Stomach (tissue), 19 donors: ENCODE measurements at regions of chr1 and their contacts with region 1.

Region 1: DNA sequence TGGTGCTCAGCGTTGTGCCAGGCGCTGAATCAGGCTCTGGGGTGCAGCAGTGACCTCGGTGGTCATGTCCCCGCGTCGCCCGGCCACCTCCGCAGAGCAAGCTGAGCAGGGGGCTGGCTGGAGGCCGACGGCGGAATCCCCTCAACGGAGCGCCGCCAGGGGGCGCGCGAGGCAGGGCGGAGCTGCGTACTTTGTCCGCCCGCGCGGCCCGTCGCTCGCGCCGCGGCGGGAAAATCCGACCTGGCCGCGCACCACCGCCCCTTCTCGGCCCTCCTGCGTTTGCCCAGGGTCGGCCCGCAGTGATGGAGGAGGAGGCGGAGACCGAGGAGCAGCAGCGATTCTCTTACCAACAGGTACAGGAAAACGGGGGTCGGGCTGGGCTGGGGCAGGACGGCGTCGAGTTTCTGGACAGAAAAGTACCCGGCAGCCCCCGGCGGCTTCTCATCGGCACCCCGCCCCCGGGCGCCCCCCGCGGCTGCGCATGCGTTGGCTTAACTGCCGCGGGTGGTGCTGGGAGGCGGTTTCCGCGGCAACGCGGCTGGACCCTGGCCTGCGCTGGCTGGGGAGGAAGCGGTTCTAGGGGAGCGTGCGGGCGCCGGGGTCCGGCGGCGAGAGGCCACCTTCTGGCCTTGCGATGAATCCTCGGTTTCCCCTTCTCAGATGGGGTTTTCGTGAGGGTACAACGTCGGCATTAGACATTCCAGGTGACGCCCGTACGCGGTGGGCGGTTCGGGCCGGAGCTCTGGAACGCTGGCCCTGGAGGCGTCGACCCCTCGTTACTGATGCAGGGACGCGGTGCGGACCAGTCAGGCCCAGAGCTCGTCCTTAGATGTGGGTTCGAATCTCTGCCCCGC is at the start of gene CENPS:
- DNase-seq: peak; percentile 95 to 96
- H3K4me3 ChIP-seq: peak within 1 kb of the TSS; percentile 76 to 92 (median 86)
- H3K27ac ChIP-seq: peak within 1 kb of the TSS; percentile 70 to 85 (median 80)
- H3K4me1 ChIP-seq: peaks cover 13 to 41% (median 27%) of the 10 kb centered on the region in 4 donors
- H3K27me3 ChIP-seq: no peaks in the 10 kb centered on the region
- CTCF ChIP-seq: peak in 6 of 7 experiments; percentile 67 to 99 (median 94)
- EP300 ChIP-seq: no peak
- POLR2A ChIP-seq: peak in 1 of 4 donors; percentile 9
- total RNA-seq, gene CENPS: 1.8 to 5.9 (median 2.9) TPM in 3 of 5 donors, not detected in the others

Region 2: GRCh38 chr1:10378081-10378841 is 52.2 kb before region 1 on chr1:
- intact Hi-C with region 1: loop called (anchors 5 kb)
- DNase-seq: peak; percentile 30 to 65
- H3K4me3 ChIP-seq: no peak overlapping the region
- H3K27ac ChIP-seq: peak overlapping the region in 3 of 5 donors; percentile 68 to 76 (median 73)
- H3K4me1 ChIP-seq: peaks cover 0 to 16% (median 2%) of the 10 kb centered on the region in 4 donors
- H3K27me3 ChIP-seq: no peaks in the 10 kb centered on the region
- CTCF ChIP-seq: no peak
- EP300 ChIP-seq: no peak
- POLR2A ChIP-seq: no peak

Region 3: GRCh38 chr1:10494754-10495474 is 64.5 kb after region 1 on chr1:
- intact Hi-C with region 1: loop called (anchors 10 kb)
- DNase-seq: peak; percentile 84 to 88
- H3K4me3 ChIP-seq: peak overlapping the region; percentile 24 to 36 (median 33)
- H3K27ac ChIP-seq: peak overlapping the region; percentile 59 to 90 (median 78)
- H3K4me1 ChIP-seq: peaks cover 20 to 27% (median 23%) of the 10 kb centered on the region in 4 donors
- H3K27me3 ChIP-seq: no peaks in the 10 kb centered on the region
- CTCF ChIP-seq: peak in 6 of 7 experiments; percentile 13 to 97 (median 88)
- EP300 ChIP-seq: no peak
- POLR2A ChIP-seq: no peak